ENCODE measurements at regions of chr2 and their contacts with region 1.

Region 1: DNA sequence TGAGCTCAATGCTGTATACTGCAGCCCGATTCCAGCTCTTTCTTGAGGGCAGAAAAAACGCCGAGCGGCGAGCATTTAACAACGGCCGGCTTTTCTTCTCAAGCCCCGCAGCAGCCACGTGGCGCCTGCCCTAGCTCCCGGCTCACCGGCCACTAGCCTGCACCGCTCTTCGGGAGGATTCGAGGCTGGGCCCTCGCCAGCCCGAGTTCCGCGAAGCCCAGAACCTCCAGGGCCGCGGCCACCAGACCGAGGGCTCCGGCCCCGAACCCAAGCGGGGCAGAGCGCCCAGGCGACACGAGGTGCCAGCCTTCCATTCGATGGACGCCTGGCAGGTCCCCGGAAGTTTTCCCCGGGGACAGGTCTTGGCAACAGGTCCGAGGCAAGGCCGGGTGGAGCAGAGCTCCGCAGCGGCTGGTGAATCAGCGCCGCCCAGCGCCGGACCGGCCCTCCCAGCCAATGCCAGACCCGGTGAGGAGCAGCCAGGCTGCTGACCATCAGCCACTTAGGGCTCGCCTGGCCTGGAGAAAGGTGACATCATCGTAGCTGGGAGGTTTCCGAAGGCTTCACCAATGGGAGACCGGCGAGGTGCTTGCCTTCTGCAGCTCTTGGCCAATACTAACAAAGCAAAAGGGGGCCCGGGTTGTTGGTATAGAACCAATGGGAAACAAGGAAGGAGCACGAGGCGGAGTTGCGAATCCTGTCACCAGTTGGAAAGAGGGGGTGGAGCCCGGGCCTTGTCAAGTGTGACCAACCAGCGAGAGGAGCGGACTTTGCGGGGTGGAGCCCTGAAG is 544 bp upstream of the MXD1 start:
- DNase-seq: peak; percentile 100
- ATAC-seq: peak; percentile 93
- H3K4me3 Mint-ChIP-seq: peak overlapping the region; percentile 84
- H3K27ac Mint-ChIP-seq: peak overlapping the region; percentile 87
- H3K4me1 Mint-ChIP-seq: peaks cover 42% of the 10 kb centered on the region
- H3K27me3 Mint-ChIP-seq: no peaks in the 10 kb centered on the region

Region 2: GRCh38 chr2:69811018-69811417 is 103.3 kb before region 1 on chr2:
- CTCF ChIA-PET with region 1: no interaction called
- POLR2A ChIA-PET with region 1: no interaction called
- DNase-seq: peak; percentile 12
- ATAC-seq: no peak
- H3K4me3 Mint-ChIP-seq: no peak overlapping the region
- H3K27ac Mint-ChIP-seq: no peak overlapping the region
- H3K4me1 Mint-ChIP-seq: no peaks in the 10 kb centered on the region
- H3K27me3 Mint-ChIP-seq: no peaks in the 10 kb centered on the region

Region 3: DNA sequence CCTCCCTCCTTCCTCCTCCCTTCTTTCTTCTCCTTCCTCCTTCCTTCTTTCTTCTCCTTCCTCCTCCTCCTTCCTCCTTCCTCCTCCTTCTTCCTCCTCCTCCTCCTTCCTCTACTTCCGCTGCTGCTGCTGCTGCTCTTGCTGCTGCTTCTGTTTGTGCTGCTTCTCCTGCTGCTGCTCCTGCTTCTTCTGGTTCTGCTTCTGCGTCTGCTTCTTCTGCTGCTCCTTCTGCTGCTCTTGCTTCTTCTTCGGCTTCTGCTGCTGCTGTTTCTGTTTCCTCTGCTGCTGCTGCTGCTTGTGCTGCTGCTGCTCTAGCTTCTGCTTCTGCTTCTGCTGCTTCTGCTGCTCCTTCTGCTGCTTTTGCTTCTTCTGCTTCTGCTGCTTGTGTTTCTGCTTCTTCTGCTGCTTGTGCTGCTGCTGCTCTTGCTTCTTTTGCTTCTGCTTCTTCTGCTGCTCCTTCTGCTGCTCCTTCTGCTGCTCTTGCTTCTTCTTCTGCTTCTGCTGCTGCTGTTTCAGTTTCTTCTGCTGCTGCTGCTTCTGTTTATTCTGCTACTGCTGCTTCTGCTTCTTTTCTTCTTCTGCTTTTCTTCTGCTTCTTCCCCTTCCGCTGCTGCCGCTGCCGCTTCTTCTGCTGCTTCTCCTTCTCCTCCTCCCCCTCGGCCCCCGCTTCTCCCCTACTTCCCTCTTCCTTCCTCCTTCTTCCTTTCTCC is 12.0 kb before region 1 on chr2:
- CTCF ChIA-PET with region 1: interaction called, 13 read pairs
- POLR2A ChIA-PET with region 1: interaction called, 8 read pairs
- DNase-seq: peak; percentile 32
- ATAC-seq: peak; percentile 62
- H3K4me3 Mint-ChIP-seq: peak overlapping the region; percentile 68
- H3K27ac Mint-ChIP-seq: peak overlapping the region; percentile 90
- H3K4me1 Mint-ChIP-seq: peaks cover 41% of the 10 kb centered on the region
- H3K27me3 Mint-ChIP-seq: no peaks in the 10 kb centered on the region

Region 4: DNA sequence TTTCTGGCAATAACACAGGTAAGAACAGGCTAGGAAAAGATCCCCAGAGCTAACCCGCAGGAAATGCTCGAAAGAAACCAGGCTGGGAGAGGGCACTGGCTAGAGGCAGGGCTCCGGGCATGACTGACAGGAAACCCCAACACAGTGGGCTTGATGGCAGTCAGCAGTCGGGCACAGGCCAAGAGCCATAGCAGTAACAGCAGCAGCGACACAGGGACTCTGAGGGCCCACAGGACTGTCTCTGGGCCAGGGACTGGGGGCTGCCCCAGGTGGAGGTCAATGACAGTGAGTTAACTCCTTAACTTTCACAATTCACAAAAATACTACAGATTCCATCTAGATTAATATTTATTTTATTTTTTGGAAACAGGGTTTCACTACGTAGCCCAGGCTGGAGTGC is 84.4 kb after region 1 on chr2:
- CTCF ChIA-PET with region 1: no interaction called
- POLR2A ChIA-PET with region 1: no interaction called
- DNase-seq: no peak
- ATAC-seq: no peak
- H3K4me3 Mint-ChIP-seq: no peak overlapping the region
- H3K27ac Mint-ChIP-seq: no peak overlapping the region
- H3K4me1 Mint-ChIP-seq: peaks cover 28% of the 10 kb centered on the region
- H3K27me3 Mint-ChIP-seq: no peaks in the 10 kb centered on the region

Region 5: DNA sequence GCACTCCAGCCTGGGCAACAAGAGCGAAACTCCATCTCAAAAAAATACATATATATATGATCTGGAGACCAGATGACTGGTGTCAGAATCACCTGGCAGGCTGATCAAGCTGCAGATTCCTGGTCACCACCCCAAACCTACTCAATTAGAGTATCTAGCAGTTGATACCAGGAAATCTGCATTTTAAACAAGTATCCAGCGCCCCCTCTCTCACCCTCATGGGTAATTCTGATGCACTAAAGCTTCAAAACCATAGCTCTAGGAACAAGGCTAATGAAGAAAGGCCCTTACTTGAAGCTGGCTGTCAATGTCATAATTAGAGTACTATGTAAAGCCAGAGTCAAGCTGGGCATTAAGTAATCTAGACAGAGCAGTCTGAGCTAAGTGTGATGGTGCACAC is 147.9 kb after region 1 on chr2:
- CTCF ChIA-PET with region 1: interaction called, 142 read pairs
- POLR2A ChIA-PET with region 1: interaction called, 4 read pairs
- DNase-seq: peak; percentile 41
- ATAC-seq: no peak
- H3K4me3 Mint-ChIP-seq: no peak overlapping the region
- H3K27ac Mint-ChIP-seq: no peak overlapping the region
- H3K4me1 Mint-ChIP-seq: peaks cover 5% of the 10 kb centered on the region
- H3K27me3 Mint-ChIP-seq: no peaks in the 10 kb centered on the region

Region 6: DNA sequence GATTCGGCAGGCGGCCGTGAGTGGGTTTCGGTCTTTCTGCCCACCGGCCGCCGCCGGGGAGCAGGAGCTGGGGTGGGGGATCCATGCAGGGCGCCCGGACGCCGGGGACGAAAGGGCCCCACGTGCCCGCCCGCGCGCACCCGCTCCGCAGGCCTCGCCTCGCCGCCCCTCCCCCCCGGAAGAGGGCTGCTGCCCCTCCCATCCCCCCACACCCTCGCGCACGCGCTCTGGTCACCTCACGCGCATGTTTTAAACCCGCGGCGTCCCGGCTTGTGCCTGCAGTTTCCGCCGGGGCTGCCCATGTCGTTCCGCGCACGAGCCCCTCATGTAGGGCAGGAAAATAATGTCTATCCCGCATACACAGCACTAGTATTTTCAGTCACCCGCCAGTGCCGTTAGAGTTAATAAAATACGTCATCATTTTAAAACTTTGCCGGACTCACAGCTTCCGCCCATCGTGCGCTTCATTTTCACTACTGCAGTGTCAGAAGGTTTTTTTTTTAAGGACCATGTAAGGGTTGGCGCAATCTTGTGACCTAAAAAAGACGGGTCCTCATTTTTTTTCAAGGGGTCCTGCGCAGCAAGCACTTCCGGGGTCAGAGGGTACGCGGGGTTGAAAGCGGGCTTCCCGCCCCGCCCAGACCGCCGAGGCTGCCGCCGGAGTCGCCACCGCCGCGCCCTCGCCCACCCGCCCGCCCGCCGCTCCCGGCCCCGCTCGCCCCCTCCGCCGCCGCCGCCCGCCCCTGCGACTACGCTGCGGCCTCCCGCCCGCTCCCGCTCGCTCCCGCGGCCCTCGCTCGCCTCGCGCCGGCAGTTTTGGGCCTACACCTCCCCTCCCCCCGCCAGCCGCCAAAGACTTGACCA is 172.7 kb after region 1 on chr2 and contains the start of gene PCBP1:
- CTCF ChIA-PET with region 1: interaction called, 39 read pairs
- POLR2A ChIA-PET with region 1: interaction called, 26 read pairs
- DNase-seq: peak; percentile 96
- ATAC-seq: peak; percentile 45
- H3K4me3 Mint-ChIP-seq: peak within 1 kb of the TSS; percentile 97
- H3K27ac Mint-ChIP-seq: peak within 1 kb of the TSS; percentile 100
- H3K4me1 Mint-ChIP-seq: peaks cover 57% of the 10 kb centered on the region
- H3K27me3 Mint-ChIP-seq: no peaks in the 10 kb centered on the region
- total RNA-seq, gene PCBP1: 516 to 518 TPM

Region 7: GRCh38 chr2:70132244-70133126 is 218.1 kb after region 1 on chr2:
- CTCF ChIA-PET with region 1: interaction called, 14 read pairs
- POLR2A ChIA-PET with region 1: interaction called, 22 read pairs
- DNase-seq: peak; percentile 65
- ATAC-seq: peak; percentile 43
- H3K4me3 Mint-ChIP-seq: peak overlapping the region; percentile 84
- H3K27ac Mint-ChIP-seq: peak overlapping the region; percentile 98
- H3K4me1 Mint-ChIP-seq: peaks cover 79% of the 10 kb centered on the region
- H3K27me3 Mint-ChIP-seq: no peaks in the 10 kb centered on the region

Region 8: GRCh38 chr2:70190418-70191243 is 276.3 kb after region 1 on chr2 and contains the start of gene C2orf42:
- CTCF ChIA-PET with region 1: interaction called, 16 read pairs
- POLR2A ChIA-PET with region 1: interaction called, 22 read pairs
- DNase-seq: peak; percentile 97
- ATAC-seq: peak; percentile 90
- H3K4me3 Mint-ChIP-seq: peak within 1 kb of the TSS; percentile 86
- H3K27ac Mint-ChIP-seq: peak within 1 kb of the TSS; percentile 97
- H3K4me1 Mint-ChIP-seq: peaks cover 21% of the 10 kb centered on the region
- H3K27me3 Mint-ChIP-seq: no peaks in the 10 kb centered on the region
- total RNA-seq, gene C2orf42: 23.0 to 29.4 TPM

Measured in activated CD8-positive, alpha-beta T cell treated with anti-CD3 and anti-CD28 coated beads, Interleukin-2, amount 10 ng/mL, durations not matched to agents 7 days and 5 days (primary cell).